ENCODE measurements at regions of chr17 and their contacts with region 1.

Region 1: DNA sequence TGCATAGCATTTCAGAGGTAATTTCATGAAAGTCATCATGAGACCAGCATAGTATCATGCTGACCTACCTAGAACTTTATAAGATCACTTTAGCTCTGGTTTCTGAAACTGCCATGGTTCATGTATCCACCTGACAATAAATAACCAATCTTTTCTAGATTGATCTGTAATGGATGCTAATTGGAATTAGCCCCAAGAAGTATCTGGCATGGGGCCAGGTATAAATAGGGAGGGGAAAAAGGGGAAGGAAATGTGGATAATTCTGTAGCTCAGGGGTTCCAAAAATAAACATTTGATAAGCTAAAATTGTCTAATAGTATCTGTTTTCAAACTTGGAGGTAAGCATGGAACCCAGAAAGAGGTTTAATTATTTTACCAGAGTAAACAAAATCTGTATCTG is 186.7 kb upstream of the NOG start:
- DNase-seq: no peak
- ATAC-seq: no peak
- H3K4me3 ChIP-seq: no peak overlapping the region
- H3K27ac ChIP-seq: no peak overlapping the region
- H3K4me1 ChIP-seq: no peaks in the 10 kb centered on the region
- H3K27me3 ChIP-seq: peaks cover 34% of the 10 kb centered on the region
- CTCF ChIP-seq: no peak

Region 2: DNA sequence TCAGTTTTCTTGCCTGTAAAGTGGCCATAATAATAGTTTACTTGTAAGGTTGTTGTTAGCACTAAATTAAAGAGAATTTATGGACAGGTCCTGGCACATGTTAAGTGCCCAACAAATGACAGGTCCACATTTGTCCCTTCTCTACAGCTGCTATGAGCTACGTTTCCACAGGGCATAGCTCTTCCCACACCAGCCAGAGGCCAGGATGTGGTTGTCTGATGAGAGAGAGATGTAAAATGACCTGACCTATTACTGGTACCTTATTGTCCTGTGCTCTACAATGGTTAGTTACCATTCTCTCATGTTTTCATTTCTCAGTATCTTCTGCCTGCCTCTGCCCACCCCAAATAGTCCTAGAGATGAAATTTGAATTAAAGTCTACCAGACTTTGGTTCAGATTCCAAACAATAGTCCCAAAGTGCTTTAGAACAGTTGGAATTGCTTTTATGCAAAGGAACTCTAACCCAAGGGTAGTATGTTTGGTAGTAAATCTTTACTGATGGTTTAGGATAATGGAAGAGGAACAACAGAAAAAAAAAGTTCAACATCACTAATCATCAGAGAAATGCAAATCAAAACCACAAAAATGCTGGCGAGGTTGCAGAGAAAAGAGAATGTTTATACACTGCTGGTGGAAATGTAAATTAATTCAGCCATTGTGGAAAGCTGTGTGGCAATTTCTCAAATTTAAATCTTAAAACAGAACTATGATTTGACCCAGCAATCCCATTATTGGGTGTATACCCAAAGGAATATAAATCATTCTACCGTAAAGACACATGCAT is 310.6 kb before region 1 on chr17:
- CTCF ChIA-PET with region 1: no interaction called
- POLR2A ChIA-PET with region 1: interaction called, 10 read pairs
- intact Hi-C with region 1: no loop called
- DNase-seq: no peak
- ATAC-seq: no peak
- H3K4me3 ChIP-seq: no peak overlapping the region
- H3K27ac ChIP-seq: no peak overlapping the region
- H3K4me1 ChIP-seq: no peaks in the 10 kb centered on the region
- H3K27me3 ChIP-seq: peaks cover 23% of the 10 kb centered on the region
- CTCF ChIP-seq: no peak

Region 3: DNA sequence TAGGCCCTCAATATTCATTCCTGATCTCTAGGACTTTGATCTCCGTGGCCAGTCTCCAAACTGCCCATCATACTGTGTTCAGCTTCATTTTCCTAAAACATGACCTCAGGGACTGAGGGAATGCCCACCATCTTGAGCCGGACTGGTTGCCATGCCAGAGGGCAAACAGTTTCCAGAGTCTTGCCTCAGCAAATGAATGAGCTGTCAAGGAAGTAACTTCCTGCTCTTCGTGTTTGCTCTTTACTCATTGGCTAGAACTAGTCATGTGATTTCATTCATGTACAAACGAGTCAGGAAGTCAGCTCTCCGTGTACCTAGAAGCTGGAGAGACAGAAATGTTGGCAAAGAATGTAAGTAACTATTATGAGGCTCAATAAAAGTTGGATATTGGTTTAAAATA is 203.4 kb before region 1 on chr17:
- CTCF ChIA-PET with region 1: no interaction called
- POLR2A ChIA-PET with region 1: no interaction called
- intact Hi-C with region 1: no loop called
- DNase-seq: peak; percentile 28
- ATAC-seq: no peak
- H3K4me3 ChIP-seq: no peak overlapping the region
- H3K27ac ChIP-seq: no peak overlapping the region
- H3K4me1 ChIP-seq: no peaks in the 10 kb centered on the region
- H3K27me3 ChIP-seq: peaks cover 5% of the 10 kb centered on the region; the same call in 1 of the 2 replicates
- CTCF ChIP-seq: no peak

Region 4: DNA sequence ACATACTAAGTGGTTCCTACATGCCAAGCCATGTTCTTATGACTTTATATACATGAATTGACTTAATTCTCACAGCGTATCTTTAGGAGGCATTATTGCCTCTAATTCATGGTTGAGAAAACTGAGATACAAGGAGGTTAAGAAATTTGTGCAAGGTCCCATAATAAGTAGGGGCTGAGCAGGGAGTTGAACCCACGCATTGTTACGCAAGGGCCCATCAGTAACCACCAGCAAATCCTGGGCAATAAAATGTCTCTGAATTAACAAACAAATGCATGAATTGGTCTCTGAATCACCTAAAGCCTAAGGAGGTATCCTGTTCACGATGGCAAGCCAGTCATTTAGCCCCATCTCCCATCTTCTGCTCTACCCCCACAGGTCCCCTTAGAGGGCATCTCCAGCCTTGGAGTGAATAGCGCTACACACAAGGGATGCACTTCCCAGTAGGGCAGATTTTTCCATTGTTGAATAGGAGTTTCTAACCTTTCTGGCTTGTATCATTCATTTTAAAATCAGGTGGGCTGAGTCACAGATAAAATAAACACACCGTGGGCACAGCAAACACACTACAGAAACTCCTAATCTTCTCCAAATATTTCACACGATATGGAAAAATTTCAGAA is 14.6 kb before region 1 on chr17:
- CTCF ChIA-PET with region 1: no interaction called
- POLR2A ChIA-PET with region 1: no interaction called
- intact Hi-C with region 1: no loop called
- DNase-seq: no peak
- ATAC-seq: no peak
- H3K4me3 ChIP-seq: no peak overlapping the region
- H3K27ac ChIP-seq: no peak overlapping the region
- H3K4me1 ChIP-seq: no peaks in the 10 kb centered on the region
- H3K27me3 ChIP-seq: peaks cover 19% of the 10 kb centered on the region; the same call in 1 of the 2 replicates
- CTCF ChIP-seq: no peak

Measured in PC-3 (cell line).